Mammary epithelial cell (primary cell): ENCODE measurements at regions of chr22 and their contacts with region 1.

Region 1: DNA sequence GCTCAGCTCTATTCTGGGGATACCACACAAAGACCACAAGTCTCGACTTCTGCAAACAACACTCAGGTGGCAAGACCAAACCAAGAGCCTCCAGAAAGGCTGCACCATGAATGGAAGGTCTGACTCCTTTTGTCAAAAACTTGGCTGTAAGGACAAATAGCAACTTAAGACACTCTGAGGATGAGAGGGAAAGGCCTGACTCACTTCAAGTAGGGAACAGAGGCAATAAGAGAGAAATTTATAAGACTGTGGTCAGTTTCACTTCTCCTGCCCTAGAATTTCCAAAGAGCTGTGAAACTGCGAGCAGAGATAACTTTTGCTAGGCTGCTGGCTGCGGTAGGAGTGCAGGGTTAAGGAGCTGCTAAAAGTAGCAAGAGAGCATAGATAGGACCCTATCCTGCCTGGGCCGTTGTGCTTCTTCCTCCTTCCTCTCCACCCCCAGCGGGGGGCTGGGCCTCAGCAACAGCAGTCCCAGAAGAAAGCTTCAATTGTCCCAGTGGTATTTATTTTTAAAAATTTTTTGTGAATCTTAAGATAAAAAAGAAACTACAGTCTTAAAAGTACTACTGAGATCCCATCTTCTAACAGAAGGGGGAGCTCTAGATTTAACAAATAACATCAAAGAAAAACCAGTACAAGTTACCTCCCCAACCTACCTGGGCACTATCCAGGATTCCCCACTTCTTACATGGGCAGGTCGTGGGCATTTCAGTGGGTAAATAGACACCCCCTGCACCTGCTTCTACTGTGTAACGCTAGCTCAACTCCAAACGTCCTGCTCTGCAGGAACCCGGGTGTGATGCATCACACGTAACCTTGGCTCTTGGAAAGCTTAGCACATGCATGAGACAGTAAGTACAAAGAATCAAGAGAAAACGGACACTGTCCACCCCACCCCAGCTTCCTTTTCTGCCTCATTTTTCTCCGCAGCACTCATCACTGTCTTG is 66.4 kb downstream of the SGSM3 start:
- DNase-seq: peak; percentile 44
- H3K4me3 ChIP-seq: no peak overlapping the region
- H3K27ac ChIP-seq: peak overlapping the region; percentile 34
- H3K4me1 ChIP-seq: peaks cover 10% of the 10 kb centered on the region
- H3K27me3 ChIP-seq: no peaks in the 10 kb centered on the region
- CTCF ChIP-seq: peak; percentile 52 to 56

Region 2: DNA sequence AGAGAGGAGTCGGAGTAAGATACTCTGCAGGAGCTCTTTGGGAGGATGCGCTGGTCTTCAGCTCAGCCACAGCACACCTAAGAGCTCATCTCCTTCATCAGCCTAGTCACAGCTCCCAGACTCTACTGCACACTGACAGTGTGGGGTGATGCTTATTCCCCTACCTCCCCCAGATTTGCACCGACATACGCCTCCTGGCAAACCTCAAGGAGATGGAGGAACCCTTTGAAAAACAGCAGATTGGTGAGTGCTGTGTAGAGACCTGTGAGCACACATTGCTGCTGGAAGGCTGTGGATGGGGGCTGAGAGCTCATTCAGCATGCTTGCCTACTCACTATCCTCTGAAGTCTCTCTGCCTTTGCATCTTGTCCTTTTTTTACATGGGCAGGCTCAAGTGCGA is 75.7 kb before region 1 on chr22:
- CTCF ChIA-PET with region 1: no interaction called
- dilution Hi-C with region 1: no loop called
- in situ Hi-C with region 1: no loop called
- intact Hi-C with region 1: no loop called
- DNase-seq: no peak
- H3K4me3 ChIP-seq: no peak overlapping the region
- H3K27ac ChIP-seq: no peak overlapping the region
- H3K4me1 ChIP-seq: no peaks in the 10 kb centered on the region
- H3K27me3 ChIP-seq: no peaks in the 10 kb centered on the region
- CTCF ChIP-seq: no peak

Region 3: GRCh38 chr22:40412441-40412840 is 24.3 kb before region 1 on chr22:
- CTCF ChIA-PET with region 1: no interaction called
- dilution Hi-C with region 1: no loop called
- in situ Hi-C with region 1: no loop called
- intact Hi-C with region 1: no loop called
- DNase-seq: no peak
- H3K4me3 ChIP-seq: no peak overlapping the region
- H3K27ac ChIP-seq: no peak overlapping the region
- H3K4me1 ChIP-seq: peaks cover 42% of the 10 kb centered on the region
- H3K27me3 ChIP-seq: no peaks in the 10 kb centered on the region
- CTCF ChIP-seq: no peak

Region 4: GRCh38 chr22:40449676-40450035 is 12.9 kb after region 1 on chr22:
- CTCF ChIA-PET with region 1: no interaction called
- dilution Hi-C with region 1: no loop called
- in situ Hi-C with region 1: no loop called
- intact Hi-C with region 1: no loop called
- DNase-seq: peak; percentile 15
- H3K4me3 ChIP-seq: no peak overlapping the region
- H3K27ac ChIP-seq: no peak overlapping the region
- H3K4me1 ChIP-seq: peaks cover 8% of the 10 kb centered on the region
- H3K27me3 ChIP-seq: no peaks in the 10 kb centered on the region
- CTCF ChIP-seq: no peak

Region 5: DNA sequence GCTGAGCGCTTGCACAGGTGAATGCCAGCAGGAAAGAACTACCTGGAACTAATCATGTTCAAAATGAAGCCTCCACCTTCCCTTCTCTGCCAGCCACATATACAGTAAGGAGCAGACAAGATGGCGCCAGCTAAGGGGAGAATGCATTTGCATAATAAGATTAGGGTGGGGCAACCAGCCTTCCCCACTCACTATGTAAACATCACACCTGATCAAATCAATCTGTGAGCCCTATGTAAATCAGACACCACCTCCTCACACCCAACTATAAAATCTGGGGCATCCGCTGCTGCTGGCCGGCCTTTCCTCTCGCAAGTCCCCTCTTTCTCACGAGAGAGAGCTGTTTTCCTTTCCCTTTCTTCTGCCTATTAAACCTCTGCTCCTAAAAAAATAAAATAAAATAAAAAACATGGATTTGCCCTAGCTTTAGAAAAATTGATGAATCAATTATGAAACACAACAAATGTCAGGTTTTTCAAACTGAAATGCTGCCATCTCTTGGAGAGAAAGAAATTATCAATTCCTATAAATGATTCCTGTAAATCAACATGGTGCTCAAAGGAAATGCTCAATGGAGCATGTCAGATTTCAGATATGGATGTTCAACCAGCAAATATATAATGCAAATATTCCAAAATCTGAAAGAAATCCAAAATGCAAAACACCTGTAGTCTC is 42.5 kb after region 1 on chr22:
- CTCF ChIA-PET with region 1: interaction called, 7 read pairs
- dilution Hi-C with region 1: no loop called
- in situ Hi-C with region 1: no loop called
- intact Hi-C with region 1: loop called (anchors 2 kb)
- DNase-seq: no peak
- H3K4me3 ChIP-seq: no peak overlapping the region
- H3K27ac ChIP-seq: peak overlapping the region; percentile 8
- H3K4me1 ChIP-seq: peaks cover 34% of the 10 kb centered on the region
- H3K27me3 ChIP-seq: no peaks in the 10 kb centered on the region
- CTCF ChIP-seq: no peak

Region 6: GRCh38 chr22:40519284-40519947 is 82.6 kb after region 1 on chr22:
- CTCF ChIA-PET with region 1: no interaction called
- dilution Hi-C with region 1: loop called (anchors 5 kb)
- in situ Hi-C with region 1: no loop called
- intact Hi-C with region 1: loop called (anchors 2 kb)
- DNase-seq: peak; percentile 36
- H3K4me3 ChIP-seq: peak overlapping the region in 1 of 3 experiments; percentile 31
- H3K27ac ChIP-seq: peak overlapping the region; percentile 82
- H3K4me1 ChIP-seq: peaks cover 6% of the 10 kb centered on the region
- H3K27me3 ChIP-seq: no peaks in the 10 kb centered on the region
- CTCF ChIP-seq: no peak

Region 7: DNA sequence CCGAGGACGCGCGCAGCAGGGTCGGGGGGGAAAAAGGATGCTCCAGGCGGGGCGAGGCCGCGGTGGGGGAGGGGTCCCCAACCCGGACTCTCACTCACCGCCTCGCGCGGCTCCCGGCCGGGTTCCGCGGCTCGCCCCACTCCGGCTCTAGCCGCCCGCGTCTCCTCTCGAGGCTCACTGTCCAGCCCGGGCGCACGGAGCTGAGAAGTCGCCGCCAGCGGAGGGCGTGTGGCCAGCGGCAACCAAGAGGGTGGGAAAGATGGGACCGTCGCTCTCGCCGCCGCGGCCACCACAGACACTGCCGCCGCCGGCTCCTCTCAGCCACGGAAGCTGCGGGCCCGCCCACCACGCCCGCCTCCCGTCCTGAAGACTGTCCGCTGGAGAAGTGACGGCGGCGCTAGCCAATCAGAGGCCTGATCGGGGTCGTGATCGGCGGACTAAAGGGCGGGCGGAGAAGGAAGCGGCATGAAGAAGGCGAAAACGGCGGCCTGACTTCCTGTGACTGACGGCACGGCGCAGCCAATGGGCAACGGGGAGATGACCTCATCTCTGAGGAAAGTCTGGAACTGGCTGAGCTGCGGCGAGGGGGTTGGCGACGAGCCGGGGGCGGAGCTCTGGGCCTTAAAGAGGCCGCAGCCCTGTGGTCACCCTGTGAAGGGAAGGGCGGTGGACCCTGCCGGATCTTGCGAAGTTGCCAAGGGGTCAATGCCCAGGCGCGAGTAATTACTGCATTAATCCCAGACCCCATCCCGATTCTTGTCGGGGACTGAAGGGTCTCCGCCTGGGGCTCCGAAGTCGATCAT is 199.8 kb after region 1 on chr22 and contains the start of gene MRTFA:
- CTCF ChIA-PET with region 1: no interaction called
- dilution Hi-C with region 1: no loop called
- in situ Hi-C with region 1: loop called (anchors 5 to 10 kb)
- intact Hi-C with region 1: no loop called
- DNase-seq: peak; percentile 100
- H3K4me3 ChIP-seq: peak within 1 kb of the TSS; percentile 85 to 100 (median 90)
- H3K27ac ChIP-seq: peak within 1 kb of the TSS; percentile 80
- H3K4me1 ChIP-seq: peaks cover 20% of the 10 kb centered on the region
- H3K27me3 ChIP-seq: no peaks in the 10 kb centered on the region
- CTCF ChIP-seq: no peak
- total RNA-seq, gene MRTFA: 51.0 to 75.7 TPM

Region 8: DNA sequence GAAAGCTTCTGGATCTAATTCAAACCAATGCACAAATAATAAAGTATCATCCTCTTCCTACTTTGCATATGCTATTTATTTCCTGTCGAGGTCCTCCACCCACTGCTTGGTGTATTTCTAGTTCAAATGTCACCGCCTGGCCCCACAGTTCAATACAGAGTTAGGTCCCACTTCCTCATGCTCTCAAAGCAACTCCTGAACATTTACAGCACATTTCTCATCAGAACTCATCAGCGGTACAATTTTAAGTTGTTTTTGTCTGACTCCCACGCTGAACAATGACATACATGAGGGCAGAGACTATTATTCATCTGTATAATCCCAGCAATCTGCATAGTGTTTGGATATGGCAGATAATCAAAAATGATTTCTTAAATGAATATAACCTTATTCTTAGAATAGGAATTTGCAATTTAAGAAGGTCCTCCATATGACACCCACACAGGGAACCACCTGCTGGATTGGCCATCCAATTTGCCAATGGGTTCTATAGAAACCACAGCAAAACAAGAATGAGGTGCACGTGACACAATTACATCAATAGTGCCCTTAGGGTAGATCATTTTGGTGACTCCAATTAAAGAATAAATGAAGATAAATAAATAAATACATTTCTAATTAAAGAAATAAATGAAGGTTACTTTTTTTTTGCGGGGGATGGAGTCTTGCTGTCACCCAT is 328.1 kb after region 1 on chr22:
- CTCF ChIA-PET with region 1: no interaction called
- dilution Hi-C with region 1: loop called (anchors 5 kb)
- in situ Hi-C with region 1: loop called in 1 of 2 experiments (anchors 25 kb)
- intact Hi-C with region 1: loop called (anchors 2 kb)
- DNase-seq: no peak
- H3K4me3 ChIP-seq: no peak overlapping the region
- H3K27ac ChIP-seq: no peak overlapping the region
- H3K4me1 ChIP-seq: no peaks in the 10 kb centered on the region
- H3K27me3 ChIP-seq: no peaks in the 10 kb centered on the region
- CTCF ChIP-seq: no peak